ENCODE measurements at regions of chr9 and their contacts with region 1.

Region 1: DNA sequence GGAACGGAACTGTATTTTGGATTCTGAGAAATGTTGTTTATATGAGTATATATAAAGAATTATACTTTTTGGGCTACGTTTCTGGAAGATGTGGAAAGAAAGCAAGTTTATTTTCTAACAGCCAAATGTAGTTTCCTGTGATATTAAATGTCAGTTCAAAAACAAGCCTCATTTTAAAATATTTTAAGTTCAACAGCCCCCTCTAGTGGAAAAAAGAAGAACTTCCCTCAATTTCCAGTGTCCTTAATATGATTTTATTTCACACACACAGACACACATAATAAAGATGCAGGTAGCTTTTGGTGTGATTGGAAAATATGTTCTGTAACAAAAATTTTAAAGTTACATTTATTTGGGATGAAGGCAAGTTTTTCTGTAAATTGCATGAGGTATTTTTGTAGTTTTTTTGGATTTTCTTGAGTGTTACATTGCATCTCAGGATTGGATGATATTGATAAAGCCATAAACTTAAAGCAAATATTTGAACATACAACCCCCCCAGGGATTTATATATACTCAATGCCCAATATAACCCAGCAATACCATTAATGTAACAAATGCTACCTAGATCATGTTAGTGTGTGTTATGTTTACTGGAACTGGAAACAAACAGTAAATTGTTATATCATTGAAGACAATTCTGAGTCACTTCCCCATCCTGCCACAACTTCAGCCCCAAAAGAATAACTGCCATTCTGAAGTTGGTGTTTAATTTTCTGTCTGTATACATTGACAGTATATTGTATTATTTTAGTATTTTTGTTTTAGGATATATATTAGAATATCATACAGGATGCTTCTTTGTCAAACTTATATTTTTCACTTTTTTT is 54.0 kb downstream of the CCDC171 start:
- DNase-seq: peak; percentile 36
- H3K4me3 ChIP-seq: no peak overlapping the region
- H3K27ac ChIP-seq: no peak overlapping the region
- H3K4me1 ChIP-seq: no peaks in the 10 kb centered on the region
- H3K27me3 ChIP-seq: no peaks in the 10 kb centered on the region
- CTCF ChIP-seq: peak; percentile 52 to 55

Region 2: DNA sequence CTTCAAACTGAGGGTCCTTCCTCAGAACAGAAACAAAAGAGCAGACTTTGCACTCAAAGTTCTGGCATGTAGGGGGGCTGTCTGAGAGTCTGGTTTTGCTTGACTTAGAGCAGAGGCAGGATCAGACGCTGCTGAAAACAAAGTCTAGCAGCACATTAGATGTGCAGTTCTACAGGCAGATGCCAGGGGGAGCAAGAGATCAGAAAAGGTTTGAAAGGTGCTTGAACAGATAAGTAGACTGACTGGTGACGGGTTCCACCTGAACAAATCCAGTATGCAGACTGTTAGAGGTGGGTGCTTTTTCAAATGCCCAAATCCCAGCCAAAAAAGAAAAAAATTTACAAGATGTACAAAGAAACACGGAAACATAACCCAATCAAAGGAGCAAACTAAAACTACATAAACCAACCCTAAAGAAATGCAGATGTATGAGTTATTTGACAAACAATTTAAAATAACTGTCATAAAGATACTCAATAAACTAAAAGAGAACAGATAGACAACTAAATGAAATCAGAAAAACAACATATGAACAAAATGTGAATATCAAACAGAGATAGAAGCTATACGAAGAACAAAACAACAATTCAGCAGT is 501.9 kb before region 1 on chr9:
- CTCF ChIA-PET with region 1: no interaction called
- dilution Hi-C with region 1: no loop called
- in situ Hi-C with region 1: loop called in 1 of 2 experiments (anchors 25 kb)
- intact Hi-C with region 1: no loop called
- DNase-seq: peak; percentile 20
- H3K4me3 ChIP-seq: no peak overlapping the region
- H3K27ac ChIP-seq: no peak overlapping the region
- H3K4me1 ChIP-seq: no peaks in the 10 kb centered on the region
- H3K27me3 ChIP-seq: no peaks in the 10 kb centered on the region
- CTCF ChIP-seq: peak; percentile 69 to 86

Region 3: GRCh38 chr9:15182101-15182551 is 424.7 kb before region 1 on chr9:
- CTCF ChIA-PET with region 1: no interaction called
- dilution Hi-C with region 1: no loop called
- in situ Hi-C with region 1: no loop called
- intact Hi-C with region 1: no loop called
- DNase-seq: no peak
- H3K4me3 ChIP-seq: no peak overlapping the region
- H3K27ac ChIP-seq: no peak overlapping the region
- H3K4me1 ChIP-seq: no peaks in the 10 kb centered on the region
- H3K27me3 ChIP-seq: no peaks in the 10 kb centered on the region
- CTCF ChIP-seq: no peak

Region 4: DNA sequence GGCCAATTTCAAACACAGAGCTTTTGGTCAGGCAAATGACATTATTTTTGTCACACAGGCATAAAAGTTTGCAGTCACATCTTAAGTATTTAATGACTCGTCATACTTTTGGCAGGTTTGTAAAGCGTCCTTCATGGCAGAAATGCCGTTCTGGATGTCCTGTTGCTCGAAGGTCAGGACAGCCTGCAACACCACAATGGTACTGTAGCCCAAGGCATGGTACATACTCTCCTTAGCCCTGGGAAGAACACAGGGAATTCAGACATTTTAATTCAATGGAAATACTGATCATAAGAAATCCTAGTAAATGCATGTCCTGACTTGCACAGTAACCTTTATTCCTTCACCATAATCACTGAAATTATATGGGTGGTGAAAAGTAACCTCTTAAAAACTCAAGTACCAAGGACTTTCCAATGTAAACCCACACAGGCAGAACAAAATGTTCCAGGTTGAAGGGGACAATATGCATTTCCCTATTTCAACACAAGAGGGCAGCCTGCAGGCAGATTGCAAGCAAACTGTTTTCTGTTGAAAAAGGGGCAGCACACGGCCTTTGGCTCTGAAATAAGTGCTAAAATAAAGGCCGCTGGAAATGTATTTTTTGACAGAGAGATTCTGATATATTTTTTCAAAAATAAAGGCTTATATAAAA is 395.6 kb before region 1 on chr9:
- CTCF ChIA-PET with region 1: no interaction called
- dilution Hi-C with region 1: no loop called
- in situ Hi-C with region 1: no loop called
- intact Hi-C with region 1: loop called (anchors 5 kb)
- DNase-seq: peak; percentile 52
- H3K4me3 ChIP-seq: no peak overlapping the region
- H3K27ac ChIP-seq: no peak overlapping the region
- H3K4me1 ChIP-seq: peaks cover 5% of the 10 kb centered on the region
- H3K27me3 ChIP-seq: no peaks in the 10 kb centered on the region
- CTCF ChIP-seq: peak; percentile 84 to 91

Region 5: GRCh38 chr9:15485836-15486666 is 120.8 kb before region 1 on chr9:
- CTCF ChIA-PET with region 1: no interaction called
- dilution Hi-C with region 1: no loop called
- in situ Hi-C with region 1: no loop called
- intact Hi-C with region 1: loop called (anchors 5 kb)
- DNase-seq: peak; percentile 6
- H3K4me3 ChIP-seq: no peak overlapping the region
- H3K27ac ChIP-seq: no peak overlapping the region
- H3K4me1 ChIP-seq: no peaks in the 10 kb centered on the region
- H3K27me3 ChIP-seq: no peaks in the 10 kb centered on the region
- CTCF ChIP-seq: peak; percentile 25 to 54

Region 6: GRCh38 chr9:15552636-15553527 is 54.0 kb before region 1 on chr9 and contains the start of gene CCDC171:
- CTCF ChIA-PET with region 1: interaction called, 7 read pairs
- dilution Hi-C with region 1: no loop called
- in situ Hi-C with region 1: no loop called
- intact Hi-C with region 1: loop called (anchors 1 kb)
- DNase-seq: peak; percentile 94
- H3K4me3 ChIP-seq: peak within 1 kb of the TSS; percentile 63 to 91 (median 83)
- H3K27ac ChIP-seq: peak within 1 kb of the TSS; percentile 60
- H3K4me1 ChIP-seq: peaks cover 15% of the 10 kb centered on the region
- H3K27me3 ChIP-seq: no peaks in the 10 kb centered on the region
- CTCF ChIP-seq: no peak
- total RNA-seq, gene CCDC171: 2.2 to 2.8 TPM